ENCODE measurements at regions of chr2 and their contacts with region 1.

Region 1: DNA sequence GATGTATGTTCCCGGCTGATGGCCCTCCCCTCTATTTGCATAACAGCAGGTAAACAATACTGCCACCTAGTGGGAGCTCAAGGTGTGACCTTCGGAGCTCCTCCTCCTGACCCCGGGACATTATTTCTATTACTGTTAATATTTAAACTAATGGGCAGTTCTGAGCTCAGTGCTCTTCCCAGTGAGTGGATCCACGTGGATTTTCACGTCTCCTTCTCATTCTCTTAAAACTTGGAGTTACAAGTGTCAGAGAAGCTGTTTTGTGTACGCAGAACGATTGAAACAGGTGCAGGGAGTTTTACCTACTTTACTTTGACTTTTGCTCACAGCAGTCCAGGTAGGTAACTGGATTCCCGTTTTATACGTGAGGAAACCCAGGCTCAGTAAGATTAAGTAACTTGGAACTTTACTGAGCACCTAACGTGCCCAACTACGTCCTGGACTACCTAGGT is 127.3 kb downstream of the PRKCE start:
- DNase-seq: peak; percentile 19 to 88 (median 61)
- ATAC-seq: peak; percentile 79 to 91 (median 84)
- H3K4me3 ChIP-seq: no peak overlapping the region
- H3K4me3 Mint-ChIP-seq: peak overlapping the region in 1 of 3 donors; percentile 46
- H3K27ac ChIP-seq: no peak overlapping the region
- H3K27ac Mint-ChIP-seq: no peak overlapping the region
- H3K4me1 ChIP-seq: no peaks in the 10 kb centered on the region
- H3K4me1 Mint-ChIP-seq: peaks cover 6 to 11% (median 7%) of the 10 kb centered on the region in 3 donors
- H3K27me3 ChIP-seq: no peaks in the 10 kb centered on the region
- H3K27me3 Mint-ChIP-seq: no peaks in the 10 kb centered on the region

Region 2: DNA sequence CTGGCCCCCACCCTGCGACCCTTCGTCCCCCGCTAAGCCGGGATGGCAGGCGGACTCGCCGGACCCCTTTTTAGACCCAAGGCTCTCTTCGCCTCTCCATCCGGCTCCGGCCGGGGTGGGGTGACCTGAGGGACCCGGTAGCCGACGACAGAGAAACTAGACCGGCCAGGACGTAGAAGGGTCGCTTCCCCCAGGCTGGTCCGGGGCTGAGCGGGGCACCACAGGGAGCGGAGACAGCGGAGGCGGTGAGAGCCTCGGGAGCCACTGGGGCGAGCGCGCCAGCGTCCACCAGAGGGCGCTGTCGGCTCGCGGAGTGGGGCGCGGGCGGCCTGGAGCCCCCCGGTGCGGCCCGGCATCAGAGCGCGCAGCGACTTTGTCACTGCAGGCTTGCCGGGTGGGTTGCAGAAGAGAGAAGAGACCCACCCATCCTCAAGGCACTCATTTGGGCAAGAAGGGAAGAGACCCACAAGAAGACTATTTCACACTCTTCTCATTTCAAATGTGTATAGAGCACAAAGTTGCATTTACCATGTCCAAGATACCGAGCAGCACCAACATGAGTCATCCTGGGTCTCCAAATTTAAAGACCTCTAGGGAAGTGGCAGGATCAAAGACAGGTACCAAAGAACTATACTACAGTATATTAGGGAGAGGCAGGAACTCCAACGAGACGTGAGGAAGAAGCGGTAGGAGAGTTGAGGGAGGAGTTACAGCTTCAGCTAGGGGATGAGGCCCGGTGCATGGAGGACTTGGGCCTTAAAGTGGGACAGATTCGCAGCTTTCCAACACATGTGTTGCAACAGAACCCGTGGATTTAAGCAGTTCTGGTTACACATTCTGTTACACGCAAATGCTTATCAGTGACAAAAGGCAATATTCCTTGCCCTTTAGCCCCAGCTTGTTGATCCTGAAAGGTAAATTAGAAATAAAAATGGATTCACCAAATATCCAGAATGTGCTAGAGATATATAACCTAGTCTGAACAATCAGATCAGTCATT is 134.9 kb before region 1 on chr2:
- CTCF ChIA-PET with region 1: interaction called, 15 to 29 read pairs
- POLR2A ChIA-PET with region 1: no interaction called
- DNase-seq: peak in 34 of 35 experiments; percentile 20 to 86 (median 66)
- ATAC-seq: peak; percentile 95 to 99 (median 98)
- H3K4me3 ChIP-seq: peak overlapping the region in 1 of 2 donors; percentile 45
- H3K4me3 Mint-ChIP-seq: peak overlapping the region; percentile 36 to 64 (median 46)
- H3K27ac ChIP-seq: no peak overlapping the region
- H3K27ac Mint-ChIP-seq: peak overlapping the region in 1 of 2 donors; percentile 31
- H3K4me1 ChIP-seq: peaks cover 0 to 11% of the 10 kb centered on the region in 2 experiments
- H3K4me1 Mint-ChIP-seq: peaks cover 8 to 16% (median 10%) of the 10 kb centered on the region in 3 donors
- H3K27me3 ChIP-seq: peaks cover 0 to 29% of the 10 kb centered on the region in 2 experiments
- H3K27me3 Mint-ChIP-seq: peaks cover 17 to 20% of the 10 kb centered on the region in 2 donors

Region 3: GRCh38 chr2:45925636-45926366 is 147.1 kb after region 1 on chr2:
- CTCF ChIA-PET with region 1: no interaction called
- POLR2A ChIA-PET with region 1: no interaction called
- DNase-seq: no peak
- ATAC-seq: no peak
- H3K4me3 ChIP-seq: no peak overlapping the region
- H3K4me3 Mint-ChIP-seq: no peak overlapping the region
- H3K27ac ChIP-seq: no peak overlapping the region
- H3K27ac Mint-ChIP-seq: no peak overlapping the region
- H3K4me1 ChIP-seq: no peaks in the 10 kb centered on the region
- H3K4me1 Mint-ChIP-seq: no peaks in the 10 kb centered on the region
- H3K27me3 ChIP-seq: no peaks in the 10 kb centered on the region
- H3K27me3 Mint-ChIP-seq: no peaks in the 10 kb centered on the region

Region 4: DNA sequence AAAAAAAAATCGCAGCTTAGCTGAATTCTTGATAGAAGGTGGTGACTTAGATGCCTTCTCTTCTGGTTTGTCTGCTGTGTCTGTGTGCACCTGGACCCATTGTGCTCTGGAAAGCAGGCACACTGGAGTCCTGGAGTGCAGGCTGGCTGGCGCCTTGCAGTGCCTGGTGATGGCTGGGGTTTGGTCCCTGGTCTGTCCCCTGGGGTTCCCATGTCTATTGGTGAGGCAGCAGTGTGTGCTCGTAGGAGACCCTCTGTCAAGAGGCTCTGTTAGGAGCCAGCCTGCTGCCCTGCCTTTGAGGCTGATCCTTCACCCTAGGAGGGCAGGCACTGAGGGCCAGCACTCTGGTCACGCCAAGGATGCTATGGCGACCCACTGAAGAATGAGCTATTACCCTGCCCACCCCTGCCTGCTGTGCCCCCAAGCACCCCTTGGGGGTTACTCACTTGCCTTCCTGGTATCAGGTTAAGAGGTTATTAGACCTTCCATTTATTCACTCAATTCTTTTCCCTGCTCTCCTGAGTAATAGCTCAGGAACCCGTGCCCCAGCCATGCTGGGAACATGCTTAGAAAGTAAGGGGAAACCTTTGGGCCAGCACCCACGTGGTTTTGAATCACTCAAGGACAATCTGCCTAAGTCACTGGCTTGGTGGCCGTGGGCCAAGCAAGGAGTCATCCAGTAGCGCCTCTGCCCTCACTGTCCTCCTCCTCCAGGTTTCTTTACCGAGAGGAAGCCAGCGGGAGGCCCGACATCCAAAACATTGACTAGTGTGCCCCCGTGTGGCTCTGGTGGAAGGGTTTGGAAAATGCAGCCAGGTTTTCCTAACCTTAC is 157.3 kb after region 1 on chr2:
- CTCF ChIA-PET with region 1: interaction called in 1 of 2 experiments, 12 read pairs
- POLR2A ChIA-PET with region 1: no interaction called
- DNase-seq: peak in 32 of 35 experiments; percentile 3 to 60 (median 22)
- ATAC-seq: peak in 3 of 4 experiments; percentile 37 to 66 (median 51)
- H3K4me3 ChIP-seq: no peak overlapping the region
- H3K4me3 Mint-ChIP-seq: no peak overlapping the region
- H3K27ac ChIP-seq: no peak overlapping the region
- H3K27ac Mint-ChIP-seq: no peak overlapping the region
- H3K4me1 ChIP-seq: peaks cover 0 to 5% of the 10 kb centered on the region in 2 experiments
- H3K4me1 Mint-ChIP-seq: peaks cover 0 to 4% (median 3%) of the 10 kb centered on the region in 3 donors
- H3K27me3 ChIP-seq: peaks cover 0 to 7% of the 10 kb centered on the region in 2 experiments
- H3K27me3 Mint-ChIP-seq: no peaks in the 10 kb centered on the region

Region 5: DNA sequence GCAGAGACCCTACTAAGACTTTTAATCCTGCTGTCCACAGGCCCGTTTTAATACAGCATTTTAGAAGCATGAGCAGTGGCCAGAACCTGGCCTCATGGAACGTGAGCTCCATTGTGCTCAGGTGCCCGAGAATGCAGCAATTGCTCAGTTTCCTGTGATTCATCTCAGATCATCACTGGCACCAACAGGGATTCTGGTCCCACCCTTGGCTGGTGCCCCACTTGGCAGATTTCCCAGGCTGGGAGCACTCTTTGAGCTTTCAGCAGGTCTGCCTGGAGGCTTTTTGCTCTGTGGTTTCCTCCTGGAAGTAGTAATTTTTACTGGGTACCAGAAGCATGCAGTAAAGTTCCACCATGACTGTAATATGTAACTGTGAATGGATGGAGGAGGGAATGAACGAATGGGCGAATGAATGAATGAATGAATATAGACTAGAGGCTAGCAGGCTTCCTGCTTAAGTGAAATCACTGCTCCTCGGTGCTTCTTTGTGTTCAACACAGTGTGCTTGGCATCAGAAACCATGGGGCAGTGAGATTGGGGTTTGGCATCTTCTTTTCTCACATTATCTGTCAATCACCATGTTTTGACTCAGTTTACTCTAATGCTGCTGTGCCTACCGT is 185.6 kb after region 1 on chr2:
- CTCF ChIA-PET with region 1: no interaction called
- POLR2A ChIA-PET with region 1: no interaction called
- DNase-seq: no peak
- ATAC-seq: no peak
- H3K4me3 ChIP-seq: no peak overlapping the region
- H3K4me3 Mint-ChIP-seq: no peak overlapping the region
- H3K27ac ChIP-seq: no peak overlapping the region
- H3K27ac Mint-ChIP-seq: no peak overlapping the region
- H3K4me1 ChIP-seq: peaks cover 6 to 9% of the 10 kb centered on the region in 2 experiments
- H3K4me1 Mint-ChIP-seq: peaks cover 16 to 24% (median 17%) of the 10 kb centered on the region in 3 donors
- H3K27me3 ChIP-seq: peaks cover 0 to 3% of the 10 kb centered on the region in 2 experiments
- H3K27me3 Mint-ChIP-seq: no peaks in the 10 kb centered on the region